Caco-2 (cell line): ENCODE measurements at regions of chr14 and their contacts with region 1.

Region 1: DNA sequence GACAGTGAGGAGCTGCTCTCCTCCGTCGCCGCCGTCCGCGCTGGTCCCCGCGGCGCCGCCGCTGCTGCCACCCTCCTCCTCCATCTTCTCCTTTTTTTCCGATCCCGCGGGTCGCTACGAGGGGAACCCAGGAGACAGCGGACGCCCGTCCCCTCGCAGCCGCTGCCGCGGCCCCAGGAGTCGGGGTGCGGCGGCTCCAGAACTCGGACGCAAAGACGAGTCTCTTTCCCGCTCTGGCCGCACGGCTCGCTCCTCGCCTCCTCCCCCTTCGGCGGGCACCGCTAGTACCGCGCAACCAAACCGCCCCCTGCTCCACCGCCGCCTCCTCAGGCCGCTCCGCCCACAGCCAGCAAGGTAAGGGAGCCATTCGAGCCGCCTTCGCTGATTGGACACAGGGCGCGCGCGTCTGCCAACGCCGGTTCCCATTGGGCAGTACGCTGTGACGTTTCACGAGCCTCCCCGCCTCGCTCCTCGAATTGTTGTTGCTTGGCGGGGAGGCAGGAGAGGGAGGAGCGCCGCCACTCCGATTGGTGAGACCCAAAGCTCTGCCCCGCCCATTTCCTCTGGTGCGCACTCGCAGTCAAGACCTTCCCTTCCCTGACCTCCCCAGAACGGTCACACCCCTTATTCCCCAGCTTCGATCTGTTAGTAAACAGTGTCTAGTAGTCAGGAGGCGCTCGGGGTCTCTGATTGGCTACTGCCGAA is at the start of gene RPS6KA5:
- DNase-seq: peak; percentile 99 to 100
- H3K4me3 ChIP-seq: peak within 1 kb of the TSS; percentile 90
- H3K4me3 Mint-ChIP-seq: no peak within 1 kb of the TSS
- H3K27ac Mint-ChIP-seq: no peak within 1 kb of the TSS
- H3K4me1 ChIP-seq: no peaks in the 10 kb centered on the region
- H3K4me1 Mint-ChIP-seq: no peaks in the 10 kb centered on the region
- H3K27me3 ChIP-seq: no peaks in the 10 kb centered on the region
- H3K27me3 Mint-ChIP-seq: no peaks in the 10 kb centered on the region
- CTCF ChIP-seq: no peak
- total RNA-seq, gene RPS6KA5: 5.7 and 6.0 TPM in 2 replicates

Region 2: DNA sequence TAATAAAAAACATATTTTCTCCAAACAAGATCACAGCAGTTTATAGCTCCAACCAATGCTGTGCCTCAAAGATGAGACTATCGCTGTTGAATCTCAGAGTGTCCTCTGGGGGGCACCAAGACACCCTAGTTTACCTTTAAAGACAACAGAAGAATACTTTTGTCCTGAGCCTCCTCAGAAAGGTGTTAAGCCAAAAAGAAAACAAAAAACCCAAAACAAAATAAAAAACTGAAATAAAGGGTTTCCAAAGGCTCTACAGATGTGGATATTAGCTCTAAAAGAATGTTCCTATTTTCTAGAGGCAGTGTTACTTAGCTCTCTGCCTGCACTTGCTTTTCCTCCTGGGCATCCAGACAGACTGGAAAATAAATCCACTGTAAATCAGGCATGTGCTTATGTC is 157.4 kb before region 1 on chr14:
- CTCF ChIA-PET with region 1: interaction called, 15 read pairs
- POLR2A ChIA-PET with region 1: no interaction called
- intact Hi-C with region 1: loop called (anchors 2 kb)
- DNase-seq: peak; percentile 55 to 64
- H3K4me3 ChIP-seq: no peak overlapping the region
- H3K4me3 Mint-ChIP-seq: no peak overlapping the region
- H3K27ac Mint-ChIP-seq: no peak overlapping the region
- H3K4me1 ChIP-seq: no peaks in the 10 kb centered on the region
- H3K4me1 Mint-ChIP-seq: no peaks in the 10 kb centered on the region
- H3K27me3 ChIP-seq: no peaks in the 10 kb centered on the region
- H3K27me3 Mint-ChIP-seq: no peaks in the 10 kb centered on the region
- CTCF ChIP-seq: peak; percentile 62 to 74

Region 3: DNA sequence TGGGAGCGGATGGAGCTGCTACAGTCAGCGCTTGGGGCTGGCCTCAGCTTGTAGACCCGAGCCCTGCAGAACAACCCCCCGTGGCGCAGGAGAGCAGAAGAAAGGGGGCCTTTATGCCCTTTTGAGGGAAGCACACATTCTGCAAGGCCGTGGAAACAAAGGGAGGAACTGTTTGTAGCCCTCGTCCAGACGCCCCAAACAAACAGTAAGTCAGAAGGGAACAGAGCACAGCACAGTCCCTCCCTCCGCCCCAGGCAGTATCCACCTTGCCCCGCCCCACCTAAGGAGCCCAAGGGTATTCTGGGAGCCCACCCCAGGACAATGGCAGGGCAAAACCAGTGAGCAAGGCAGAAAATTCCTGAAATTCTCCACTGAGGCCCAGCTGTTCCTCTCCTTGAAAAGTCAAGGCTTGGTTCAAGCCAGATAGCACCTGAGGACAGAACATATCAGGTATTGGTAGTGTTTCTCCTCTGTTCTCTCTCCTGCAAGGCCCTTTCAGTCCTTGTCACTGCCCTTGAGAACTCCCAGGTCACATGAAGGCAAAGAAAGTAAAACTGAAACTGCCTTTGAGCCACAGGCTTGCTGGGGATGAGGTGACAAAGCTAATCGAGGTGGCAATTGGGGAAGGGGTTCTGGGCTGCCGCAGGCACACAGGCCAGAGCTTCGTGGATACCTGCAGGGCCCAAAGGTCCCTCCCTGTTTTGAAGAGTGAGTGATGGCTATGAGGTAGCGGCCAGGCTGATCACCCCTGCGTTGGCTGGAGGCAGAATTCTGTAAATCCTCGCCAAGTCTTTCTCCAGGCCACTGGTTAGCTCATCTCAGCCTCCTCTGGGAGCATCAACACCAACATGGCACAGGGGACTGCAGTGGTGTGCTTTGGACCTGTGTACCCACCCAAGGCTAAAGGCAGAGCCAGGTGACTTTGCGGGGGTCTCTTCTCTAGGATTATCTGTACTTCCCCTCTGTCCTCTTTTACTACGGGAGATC is 53.9 kb after region 1 on chr14:
- CTCF ChIA-PET with region 1: interaction called, 18 read pairs
- POLR2A ChIA-PET with region 1: interaction called, 27 read pairs
- intact Hi-C with region 1: loop called (anchors 1 kb)
- DNase-seq: peak; percentile 87 to 89
- H3K4me3 ChIP-seq: peak overlapping the region; percentile 64
- H3K4me3 Mint-ChIP-seq: peak overlapping the region; percentile 84
- H3K27ac Mint-ChIP-seq: peak overlapping the region; percentile 84
- H3K4me1 ChIP-seq: peaks cover 9% of the 10 kb centered on the region
- H3K4me1 Mint-ChIP-seq: peaks cover 5% of the 10 kb centered on the region
- H3K27me3 ChIP-seq: no peaks in the 10 kb centered on the region
- H3K27me3 Mint-ChIP-seq: no peaks in the 10 kb centered on the region
- CTCF ChIP-seq: no peak

Region 4: GRCh38 chr14:91155626-91156089 is 95.2 kb after region 1 on chr14:
- CTCF ChIA-PET with region 1: interaction called, 3 read pairs
- POLR2A ChIA-PET with region 1: interaction called, 4 read pairs
- intact Hi-C with region 1: loop called (anchors 1 kb)
- DNase-seq: no peak
- H3K4me3 ChIP-seq: no peak overlapping the region
- H3K4me3 Mint-ChIP-seq: no peak overlapping the region
- H3K27ac Mint-ChIP-seq: peak overlapping the region; percentile 94
- H3K4me1 ChIP-seq: peaks cover 61% of the 10 kb centered on the region
- H3K4me1 Mint-ChIP-seq: peaks cover 44% of the 10 kb centered on the region
- H3K27me3 ChIP-seq: no peaks in the 10 kb centered on the region
- H3K27me3 Mint-ChIP-seq: no peaks in the 10 kb centered on the region
- CTCF ChIP-seq: no peak